Naive thymus-derived CD4-positive, alpha-beta T cell (primary cell): ENCODE measurements at regions of chr10 and their contacts with region 1.

Region 1: DNA sequence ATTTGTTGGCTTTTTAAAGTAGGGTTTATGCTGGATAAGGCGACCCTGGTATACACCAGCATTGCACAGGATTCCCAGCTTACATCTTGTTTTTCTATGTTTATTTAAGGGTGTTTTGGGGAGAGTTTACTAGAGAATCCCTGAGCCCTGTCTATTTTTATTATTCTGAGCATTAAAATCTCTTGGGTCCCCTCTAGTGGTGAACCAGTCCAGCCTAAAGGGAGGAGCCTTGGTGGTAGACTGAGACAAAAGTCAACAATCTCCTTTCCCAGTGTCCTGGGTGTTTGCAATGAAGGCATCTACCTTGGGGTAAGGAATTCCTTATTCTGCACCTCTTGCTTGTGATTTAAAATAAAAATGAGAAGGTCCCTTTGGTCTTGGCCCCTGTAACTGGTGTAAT is 38.2 kb downstream of the ANTXRL start:
- DNase-seq: peak in 5 of 9 donors; percentile 9 to 39 (median 25)
- ATAC-seq: peak; percentile 38
- H3K4me3 ChIP-seq: no peak overlapping the region
- H3K4me3 Mint-ChIP-seq: no peak overlapping the region
- H3K27ac ChIP-seq: no peak overlapping the region
- H3K27ac Mint-ChIP-seq: no peak overlapping the region
- H3K4me1 ChIP-seq: no peaks in the 10 kb centered on the region
- H3K4me1 Mint-ChIP-seq: no peaks in the 10 kb centered on the region
- H3K27me3 ChIP-seq: no peaks in the 10 kb centered on the region
- H3K27me3 Mint-ChIP-seq: peaks cover 0 to 34% (median 0%) of the 10 kb centered on the region in 5 donors

Region 2: DNA sequence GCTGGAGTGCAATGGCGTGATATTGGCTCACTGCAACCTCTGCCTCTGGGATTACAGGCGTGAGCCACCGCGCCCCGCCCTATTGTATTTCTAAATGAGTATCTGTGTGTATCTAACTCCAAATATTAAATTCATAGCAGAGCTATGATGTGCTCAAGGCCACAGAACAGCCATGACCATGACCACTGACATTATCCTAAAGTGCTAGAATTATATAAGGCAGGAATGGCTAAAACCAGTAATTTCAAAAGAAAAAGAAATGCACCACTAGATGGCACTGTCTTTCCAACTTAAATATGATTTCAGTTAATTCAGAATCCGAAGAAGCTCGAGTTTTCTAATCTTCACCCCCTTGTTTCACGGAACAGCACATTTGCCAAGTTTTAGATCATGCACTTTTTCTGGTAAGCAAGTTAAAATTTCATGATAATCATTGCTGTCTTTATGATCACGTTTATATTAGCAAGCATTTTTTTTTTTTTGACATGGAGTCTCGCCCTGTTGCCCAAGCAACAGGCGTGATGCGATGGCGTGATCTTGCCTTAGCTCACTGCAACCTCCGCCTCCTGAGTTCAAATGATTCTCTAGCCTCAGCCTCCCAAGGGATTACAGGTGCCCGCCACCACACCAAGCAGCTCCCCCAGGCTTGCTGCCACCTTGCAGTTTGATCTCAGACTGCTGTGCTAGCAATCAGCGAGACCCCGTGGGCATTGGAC is 1074.9 kb before region 1 on chr10:
- CTCF ChIA-PET with region 1: no interaction called
- POLR2A ChIA-PET with region 1: no interaction called
- intact Hi-C with region 1: loop called in 1 of 2 experiments (anchors 10 kb)
- DNase-seq: peak in 7 of 9 donors; percentile 20 to 70 (median 50)
- ATAC-seq: peak; percentile 72
- H3K4me3 ChIP-seq: no peak overlapping the region
- H3K4me3 Mint-ChIP-seq: peak overlapping the region in 6 of 10 donors; percentile 3 to 64 (median 46)
- H3K27ac ChIP-seq: no peak overlapping the region
- H3K27ac Mint-ChIP-seq: no peak overlapping the region
- H3K4me1 ChIP-seq: peaks cover 0 to 4% of the 10 kb centered on the region in 2 donors
- H3K4me1 Mint-ChIP-seq: peaks cover 0 to 20% (median 6%) of the 10 kb centered on the region in 7 donors
- H3K27me3 ChIP-seq: no peaks in the 10 kb centered on the region
- H3K27me3 Mint-ChIP-seq: peaks cover 0 to 19% (median 4%) of the 10 kb centered on the region in 5 donors

Region 3: DNA sequence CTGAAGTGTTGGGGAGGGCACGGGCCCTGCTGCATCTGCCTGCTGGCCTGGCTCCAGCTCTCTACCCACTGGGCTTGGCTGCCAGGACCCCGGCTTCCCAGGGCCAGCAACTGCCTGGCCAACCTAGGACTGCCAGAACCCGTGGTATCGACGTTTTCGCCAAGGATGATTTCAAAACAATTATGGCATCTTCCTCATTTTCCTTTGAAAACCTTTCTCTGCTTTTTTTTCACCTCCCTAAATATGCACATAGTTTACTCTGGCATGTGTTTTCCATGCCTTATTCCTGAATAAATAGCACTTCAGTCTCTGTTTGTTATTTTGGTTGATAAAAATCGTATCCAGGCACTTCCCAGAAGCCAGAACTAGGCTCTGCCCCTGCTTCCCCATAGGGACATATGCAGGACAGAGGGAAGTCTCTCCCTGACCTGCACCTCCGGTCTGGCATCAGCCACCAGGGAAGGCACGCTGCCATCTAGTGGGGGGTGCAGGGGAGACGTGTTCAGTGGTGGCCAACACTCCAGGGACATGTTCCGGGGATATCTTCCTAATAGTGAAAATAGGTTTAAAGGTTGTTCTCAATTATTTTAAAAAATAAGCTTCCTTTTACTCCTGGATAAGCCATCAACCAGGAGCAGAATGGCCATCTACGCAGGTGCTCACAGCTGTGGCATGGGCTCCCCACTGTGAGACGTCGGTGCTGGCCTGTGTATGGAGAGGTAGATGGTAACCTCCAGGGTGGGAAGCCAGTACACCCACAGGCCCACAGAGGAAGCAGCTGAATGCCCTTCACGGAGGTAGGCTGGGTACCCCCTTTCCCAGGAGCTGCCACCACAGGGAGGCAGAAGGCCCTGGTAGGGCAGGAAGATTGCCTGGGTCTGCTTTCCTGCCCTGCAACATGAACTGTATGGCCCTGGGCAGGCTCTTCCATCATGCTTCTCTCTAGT is 68.9 kb before region 1 on chr10:
- CTCF ChIA-PET with region 1: no interaction called
- POLR2A ChIA-PET with region 1: no interaction called
- intact Hi-C with region 1: loop called in 1 of 2 experiments (anchors 1 kb)
- DNase-seq: peak in 3 of 9 donors; percentile 16 to 60 (median 29)
- ATAC-seq: peak; percentile 74
- H3K4me3 ChIP-seq: no peak overlapping the region
- H3K4me3 Mint-ChIP-seq: peak overlapping the region in 1 of 10 donors; percentile 0
- H3K27ac ChIP-seq: no peak overlapping the region
- H3K27ac Mint-ChIP-seq: peak overlapping the region in 8 of 9 donors; percentile 26 to 81 (median 61)
- H3K4me1 ChIP-seq: peaks cover 0 to 2% of the 10 kb centered on the region in 2 donors
- H3K4me1 Mint-ChIP-seq: peaks cover 12 to 57% (median 48%) of the 10 kb centered on the region in 7 donors
- H3K27me3 ChIP-seq: no peaks in the 10 kb centered on the region
- H3K27me3 Mint-ChIP-seq: no peaks in the 10 kb centered on the region